Left cardiac atrium (tissue), 4 donors: ENCODE measurements at regions of chr13 and their contacts with region 1.

Region 1: GRCh38 chr13:112942689-112943308 is 26.2 kb upstream of the MCF2L start:
- DNase-seq: peak; percentile 97
- ATAC-seq: peak; percentile 96 to 97

Region 2: DNA sequence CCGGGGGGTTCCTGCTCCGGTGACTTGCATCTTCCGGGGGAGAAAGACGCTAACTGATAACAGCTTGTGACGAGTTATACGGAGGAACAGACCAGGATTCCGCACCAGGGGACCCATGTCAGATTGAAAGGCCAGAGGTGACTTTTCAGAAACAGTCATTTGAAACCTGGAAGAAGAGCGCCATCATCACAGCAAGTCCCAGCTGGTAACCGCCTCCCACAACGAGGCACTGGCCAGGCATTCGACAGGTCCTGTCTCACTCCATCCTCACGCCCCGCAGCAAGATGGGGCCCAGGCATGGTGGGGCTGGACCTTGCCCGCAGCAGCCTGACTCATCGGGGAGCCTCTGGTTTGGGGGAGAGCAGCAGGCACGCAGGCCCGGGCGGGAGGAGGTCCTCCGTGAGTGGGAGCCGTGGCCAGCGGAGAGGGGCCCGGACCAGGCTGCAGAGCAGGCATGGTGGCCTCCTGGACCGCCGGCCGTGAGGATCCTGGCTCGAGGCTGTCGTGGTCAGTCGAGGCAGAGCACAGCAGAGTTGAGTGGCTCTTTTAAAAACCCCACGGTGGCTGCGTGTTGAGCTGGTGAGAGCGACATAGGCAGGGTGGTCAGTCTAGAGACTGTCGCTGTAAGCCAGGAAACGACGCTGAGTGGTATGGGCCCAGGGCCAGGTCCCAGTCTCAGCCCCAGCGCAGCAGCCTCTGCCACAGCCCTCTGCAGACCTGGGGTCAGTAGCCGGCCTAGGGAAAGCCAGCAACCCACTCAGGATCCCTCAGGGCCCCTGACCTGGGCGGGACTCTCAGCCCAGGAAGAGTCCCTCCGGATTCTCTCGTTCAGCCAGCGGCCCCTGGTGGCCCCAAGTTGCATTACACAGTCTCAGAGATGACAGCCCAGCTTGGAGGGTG is 68.7 kb before region 1 on chr13:
- intact Hi-C with region 1: no loop called
- DNase-seq: peak; percentile 85
- ATAC-seq: peak; percentile 80 to 84

Region 3: DNA sequence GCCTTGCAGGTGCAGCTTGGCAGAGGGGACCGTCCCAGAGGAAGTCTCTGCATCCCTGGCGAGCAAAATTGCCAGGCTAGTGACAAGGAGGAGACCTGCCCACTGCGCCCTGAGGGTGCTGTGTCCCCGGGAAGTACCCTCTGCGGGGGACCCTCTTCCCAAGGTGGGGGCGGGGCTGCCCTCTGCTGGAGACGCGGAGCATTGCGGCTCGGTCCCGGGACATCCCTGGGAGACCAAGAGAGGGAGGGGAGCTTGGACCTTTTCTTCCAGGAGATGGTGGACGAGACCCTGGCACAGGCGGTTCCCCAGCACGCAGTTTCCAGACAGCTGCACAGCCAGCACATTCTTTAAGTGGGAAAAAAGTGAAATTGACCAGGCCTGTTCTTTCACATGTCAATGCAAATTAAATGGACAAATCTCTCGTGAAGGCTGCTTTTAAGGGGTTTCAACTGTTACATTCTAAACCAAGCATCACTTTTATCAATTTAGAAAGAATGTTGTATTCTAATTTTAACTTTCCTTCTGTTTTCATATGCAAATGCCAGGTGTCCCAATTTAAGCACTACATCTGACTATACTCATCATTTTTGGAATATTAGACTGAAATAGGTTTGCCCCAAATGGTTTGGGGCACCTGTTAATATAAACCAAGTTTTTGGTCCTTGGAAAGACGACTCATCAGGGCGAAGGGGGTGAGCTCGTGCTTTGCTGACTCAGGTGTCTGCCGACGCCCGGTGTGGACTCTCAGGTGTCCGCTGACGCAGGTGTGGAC is 86.9 kb after region 1 on chr13:
- intact Hi-C with region 1: loop called in 1 of 2 experiments (anchors 1 kb)
- DNase-seq: no peak
- ATAC-seq: peak in 1 of 2 donors; percentile 54